BJ (cell line): ENCODE measurements at regions of chr9 and their contacts with region 1.

Region 1: GRCh38 chr9:20622330-20623020 is at the start of gene MLLT3:
- DNase-seq: peak; percentile 73
- H3K4me3 ChIP-seq: peak within 1 kb of the TSS; percentile 77
- H3K27me3 ChIP-seq: no peaks in the 10 kb centered on the region
- CTCF ChIP-seq: no peak
- polyA plus RNA-seq, gene MLLT3: 13.8 and 32.1 TPM in 2 replicates

Region 2: DNA sequence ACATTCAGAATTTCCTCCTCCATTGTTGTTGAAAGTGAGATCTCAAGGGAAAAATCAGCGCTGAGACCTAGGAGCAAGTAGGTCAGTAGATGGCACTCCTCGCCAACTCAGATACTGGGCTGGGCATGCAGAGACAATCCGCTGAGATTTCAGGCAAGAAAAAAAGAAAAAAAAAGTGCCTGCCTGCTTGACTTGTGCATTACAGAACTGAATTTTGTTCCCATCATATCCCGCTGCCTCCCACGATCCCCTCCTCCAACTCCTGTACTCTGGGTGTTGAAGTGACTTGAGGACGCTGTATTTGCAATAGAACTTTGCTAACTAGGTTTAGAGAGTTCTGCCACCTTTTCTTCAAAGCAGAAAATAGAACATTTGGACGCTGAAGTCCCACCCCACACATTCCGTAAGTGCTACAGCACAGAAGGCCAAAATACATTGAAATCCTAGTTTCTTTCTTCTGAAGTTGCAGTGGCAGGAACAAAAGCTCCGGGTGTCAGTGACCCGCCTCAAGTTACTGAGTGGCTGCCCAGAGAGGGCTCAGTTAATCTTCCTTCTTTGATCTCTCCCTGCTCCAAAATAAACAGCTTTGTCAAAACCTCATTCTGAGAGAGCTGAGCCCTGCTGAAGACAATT is 266.0 kb before region 1 on chr9:
- CTCF ChIA-PET with region 1: interaction called, 52 read pairs
- POLR2A ChIA-PET with region 1: interaction called, 5 read pairs
- DNase-seq: peak; percentile 41
- H3K4me3 ChIP-seq: no peak overlapping the region
- H3K27me3 ChIP-seq: no peaks in the 10 kb centered on the region
- CTCF ChIP-seq: peak; percentile 78

Region 3: GRCh38 chr9:20684035-20684872 is 61.8 kb after region 1 on chr9 and contains the start of gene FOCAD:
- CTCF ChIA-PET with region 1: interaction called, 15 read pairs
- POLR2A ChIA-PET with region 1: interaction called, 4 read pairs
- DNase-seq: peak; percentile 65
- H3K4me3 ChIP-seq: peak within 1 kb of the TSS; percentile 79
- H3K27me3 ChIP-seq: no peaks in the 10 kb centered on the region
- CTCF ChIP-seq: no peak
- polyA plus RNA-seq, gene FOCAD: 32.9 and 42.1 TPM in 2 replicates

Region 4: DNA sequence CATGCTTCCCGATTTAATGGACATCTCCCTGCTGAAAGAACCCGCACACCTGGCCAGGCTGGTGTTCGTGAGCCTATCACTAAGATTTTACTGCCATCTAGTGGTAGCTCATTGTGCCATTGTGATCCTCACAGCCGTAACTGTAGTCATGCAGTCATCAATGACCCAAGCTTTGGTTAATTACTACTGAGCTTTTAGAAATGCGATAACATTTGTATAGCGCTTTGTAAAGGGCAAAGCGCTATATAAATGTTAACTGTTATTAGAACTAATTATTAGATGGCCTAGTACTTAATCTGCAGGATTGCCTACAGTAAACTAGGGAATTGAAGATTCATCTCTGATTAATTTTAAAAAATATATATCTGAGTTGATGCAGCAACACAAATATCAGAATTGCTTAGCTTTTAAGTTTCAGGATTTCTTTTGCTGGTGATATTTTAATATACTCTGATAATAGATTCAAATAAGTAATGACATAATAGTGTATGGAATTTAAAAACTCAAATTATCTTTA is 318.8 kb after region 1 on chr9:
- CTCF ChIA-PET with region 1: interaction called, 103 read pairs
- POLR2A ChIA-PET with region 1: no interaction called
- DNase-seq: no peak
- H3K4me3 ChIP-seq: no peak overlapping the region
- H3K27me3 ChIP-seq: no peaks in the 10 kb centered on the region
- CTCF ChIP-seq: peak; percentile 86